ENCODE measurements at regions of chr17 and their contacts with region 1.

Region 1: GRCh38 chr17:14061666-14062560 is 7.4 kb upstream of the COX10 start:
- DNase-seq: no peak
- H3K4me3 Mint-ChIP-seq: no peak overlapping the region
- H3K27ac Mint-ChIP-seq: no peak overlapping the region
- H3K4me1 Mint-ChIP-seq: no peaks in the 10 kb centered on the region
- H3K27me3 Mint-ChIP-seq: no peaks in the 10 kb centered on the region
- CTCF ChIP-seq: no peak

Region 2: GRCh38 chr17:14205989-14206461 is 144.1 kb after region 1 on chr17:
- CTCF ChIA-PET with region 1: no interaction called
- intact Hi-C with region 1: loop called (anchors 5 kb)
- DNase-seq: peak; percentile 92
- H3K4me3 Mint-ChIP-seq: peak overlapping the region; percentile 34
- H3K27ac Mint-ChIP-seq: peak overlapping the region; percentile 73
- H3K4me1 Mint-ChIP-seq: peaks cover 77% of the 10 kb centered on the region
- H3K27me3 Mint-ChIP-seq: no peaks in the 10 kb centered on the region
- CTCF ChIP-seq: no peak